Tibial artery (tissue), 4 donors: ENCODE measurements at regions of chr13 and their contacts with region 1.

Region 1: DNA sequence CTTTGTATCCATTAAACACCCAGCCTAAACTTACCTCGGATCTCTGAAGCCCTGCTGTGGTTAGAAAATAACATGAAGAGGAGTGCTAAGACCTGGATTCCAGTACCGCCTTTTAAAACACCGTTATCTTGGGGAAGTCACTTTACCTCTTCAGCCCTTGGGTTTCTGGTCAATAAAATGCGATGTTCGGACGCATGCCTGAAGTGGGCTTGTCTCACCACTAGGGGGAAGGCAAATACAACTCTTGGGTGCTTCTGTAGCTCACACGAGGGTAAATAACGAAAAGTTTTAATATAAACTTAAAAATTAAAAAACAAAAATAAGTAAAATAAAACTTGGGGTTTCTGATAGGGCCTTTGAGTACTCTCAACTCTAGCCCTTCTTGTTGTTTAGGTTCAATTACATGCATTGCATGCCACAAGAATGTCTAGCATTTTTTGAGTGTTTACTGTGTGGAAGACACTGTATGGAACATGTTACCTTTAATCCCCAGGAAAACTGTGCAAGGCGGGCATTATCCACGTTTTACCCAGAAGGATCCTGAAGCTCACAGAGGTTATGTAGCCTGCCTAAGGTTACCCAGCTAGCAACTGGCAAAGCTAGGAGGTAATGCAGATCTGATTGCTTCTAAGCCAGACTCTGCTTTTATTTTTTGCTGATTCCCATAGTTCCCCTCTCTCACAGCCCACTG is 240.4 kb downstream of the LMO7 start:
- DNase-seq: peak; percentile 60 to 73
- H3K4me3 ChIP-seq: no peak overlapping the region
- H3K27ac ChIP-seq: no peak overlapping the region
- H3K4me1 ChIP-seq: peaks cover 0 to 6% (median 1%) of the 10 kb centered on the region in 4 donors
- H3K27me3 ChIP-seq: no peaks in the 10 kb centered on the region
- CTCF ChIP-seq: peak; percentile 86

Region 2: DNA sequence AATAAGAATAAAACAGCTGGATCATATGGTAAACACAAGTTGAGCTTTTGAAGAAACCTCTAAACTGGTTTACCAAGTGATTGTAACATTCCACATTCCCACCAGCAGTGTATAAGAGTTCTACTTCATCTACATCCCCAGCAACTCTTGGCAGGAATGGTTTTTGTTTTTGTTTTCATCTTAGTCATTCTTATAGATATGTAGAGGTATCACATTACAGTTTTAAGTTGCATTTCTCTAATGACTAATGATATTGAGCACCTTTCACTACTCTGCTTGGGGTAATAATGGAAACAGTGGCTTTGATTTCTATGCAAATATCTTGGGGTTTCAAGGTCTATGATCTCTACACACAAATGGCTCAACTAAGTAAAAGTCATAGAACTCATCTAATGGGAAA is 1009.0 kb before region 1 on chr13:
- intact Hi-C with region 1: no loop called
- DNase-seq: no peak
- H3K4me3 ChIP-seq: no peak overlapping the region
- H3K27ac ChIP-seq: no peak overlapping the region
- H3K4me1 ChIP-seq: peaks cover 0 to 12% (median 0%) of the 10 kb centered on the region in 4 donors
- H3K27me3 ChIP-seq: no peaks in the 10 kb centered on the region
- CTCF ChIP-seq: no peak

Region 3: DNA sequence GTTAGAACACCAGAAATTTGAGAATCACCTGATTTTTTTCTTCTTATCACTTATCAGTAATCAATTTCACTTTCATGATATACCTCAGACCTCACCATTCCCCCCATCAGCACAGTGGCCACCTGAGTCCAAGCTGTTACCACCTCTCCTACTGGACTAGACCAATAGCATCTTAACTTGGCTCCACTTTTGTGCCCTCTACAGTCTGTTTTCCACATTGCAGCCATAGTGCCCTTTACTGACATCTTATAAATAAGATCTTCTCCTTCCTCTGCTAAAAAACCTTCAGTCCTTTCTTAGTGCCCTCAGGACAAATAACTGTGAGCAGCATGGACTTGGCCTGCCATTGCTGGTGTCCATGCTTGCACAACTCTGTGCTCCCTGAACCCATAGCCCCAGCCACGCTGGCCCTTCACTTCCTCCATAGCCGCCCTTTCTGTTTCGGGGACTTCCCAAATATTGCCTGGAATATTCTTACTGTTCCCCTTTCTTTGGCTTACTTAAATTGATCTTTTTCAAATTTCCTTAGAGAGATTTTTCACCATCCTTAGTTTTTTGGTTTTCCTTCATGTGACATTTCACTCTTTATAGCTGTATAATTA is 140.4 kb after region 1 on chr13:
- intact Hi-C with region 1: loop called (anchors 5 kb)
- DNase-seq: no peak
- H3K4me3 ChIP-seq: no peak overlapping the region
- H3K27ac ChIP-seq: no peak overlapping the region
- H3K4me1 ChIP-seq: peaks cover 0 to 35% (median 8%) of the 10 kb centered on the region in 4 donors
- H3K27me3 ChIP-seq: no peaks in the 10 kb centered on the region
- CTCF ChIP-seq: peak in 1 of 2 experiments; percentile 15

Region 4: GRCh38 chr13:76473552-76474134 is 597.1 kb after region 1 on chr13:
- intact Hi-C with region 1: loop called (anchors 2 kb)
- DNase-seq: peak; percentile 69 to 78
- H3K4me3 ChIP-seq: no peak overlapping the region
- H3K27ac ChIP-seq: no peak overlapping the region
- H3K4me1 ChIP-seq: no peaks in the 10 kb centered on the region
- H3K27me3 ChIP-seq: no peaks in the 10 kb centered on the region
- CTCF ChIP-seq: peak; percentile 72 to 94

Region 5: GRCh38 chr13:76711550-76712182 is 835.2 kb after region 1 on chr13:
- intact Hi-C with region 1: no loop called
- DNase-seq: peak; percentile 49 to 66
- H3K4me3 ChIP-seq: no peak overlapping the region
- H3K27ac ChIP-seq: no peak overlapping the region
- H3K4me1 ChIP-seq: peaks cover 0 to 32% (median 5%) of the 10 kb centered on the region in 4 donors
- H3K27me3 ChIP-seq: no peaks in the 10 kb centered on the region
- CTCF ChIP-seq: no peak

Region 6: GRCh38 chr13:76903544-76904162 is 1027.1 kb after region 1 on chr13:
- intact Hi-C with region 1: loop called (anchors 5 kb)
- DNase-seq: peak; percentile 69 to 80
- H3K4me3 ChIP-seq: no peak overlapping the region
- H3K27ac ChIP-seq: no peak overlapping the region
- H3K4me1 ChIP-seq: no peaks in the 10 kb centered on the region
- H3K27me3 ChIP-seq: no peaks in the 10 kb centered on the region
- CTCF ChIP-seq: peak; percentile 85 to 97